ENCODE measurements at regions of chr9 and their contacts with region 1.

Region 1: DNA sequence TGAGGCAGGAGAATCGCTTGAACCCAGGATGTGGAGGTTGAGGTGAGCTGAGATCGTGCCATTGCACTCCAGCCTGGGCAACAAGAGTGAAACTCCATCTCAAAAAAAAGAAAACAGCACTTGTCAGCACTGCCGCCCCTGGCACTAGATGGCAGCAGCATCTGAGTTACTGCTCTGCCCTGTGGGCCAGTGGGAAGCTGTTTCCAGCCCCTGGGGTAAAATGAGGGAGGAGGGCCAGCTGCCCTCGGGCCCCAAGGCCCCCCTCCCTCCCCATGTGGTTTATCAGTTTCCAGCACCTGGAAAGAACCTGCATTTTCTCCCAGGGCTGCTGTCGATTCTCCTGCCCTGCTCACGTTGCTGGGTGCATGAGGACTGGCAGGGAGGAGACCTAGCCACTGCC is 13.2 kb upstream of the CEL start:
- DNase-seq: no peak
- H3K4me3 ChIP-seq: no peak overlapping the region
- H3K27me3 ChIP-seq: no peaks in the 10 kb centered on the region
- CTCF ChIP-seq: peak; percentile 54

Region 2: GRCh38 chr9:133030317-133031129 is 18.0 kb before region 1 on chr9 and contains the start of gene GTF3C5:
- CTCF ChIA-PET with region 1: interaction called, 11 read pairs
- POLR2A ChIA-PET with region 1: interaction called, 4 read pairs
- DNase-seq: peak; percentile 98
- H3K4me3 ChIP-seq: peak within 1 kb of the TSS; percentile 88
- H3K27me3 ChIP-seq: no peaks in the 10 kb centered on the region
- CTCF ChIP-seq: no peak
- polyA plus RNA-seq, gene GTF3C5: 36.0 and 47.7 TPM in 2 replicates